ENCODE measurements at regions of chr9 and their contacts with region 1.

Region 1: GRCh38 chr9:136949817-136950655 is 2.0 kb upstream of the LCN12 start:
- DNase-seq: peak; percentile 86 to 99
- H3K4me3 ChIP-seq: peak overlapping the region; percentile 77
- H3K27ac ChIP-seq: peak overlapping the region; percentile 68
- H3K4me1 ChIP-seq: peaks cover 20% of the 10 kb centered on the region
- H3K27me3 ChIP-seq: no peaks in the 10 kb centered on the region
- CTCF ChIP-seq: no peak; the same call in 1 of the 2 replicates

Region 2: GRCh38 chr9:136372561-136373299 is 577.3 kb before region 1 on chr9:
- CTCF ChIA-PET with region 1: no interaction called
- POLR2A ChIA-PET with region 1: no interaction called
- intact Hi-C with region 1: no loop called
- DNase-seq: peak; percentile 89 to 91
- H3K4me3 ChIP-seq: peak overlapping the region; percentile 38; the same call in 1 of the 2 replicates
- H3K27ac ChIP-seq: peak overlapping the region; percentile 81
- H3K4me1 ChIP-seq: peaks cover 25% of the 10 kb centered on the region
- H3K27me3 ChIP-seq: no peaks in the 10 kb centered on the region
- CTCF ChIP-seq: peak; percentile 36

Region 3: DNA sequence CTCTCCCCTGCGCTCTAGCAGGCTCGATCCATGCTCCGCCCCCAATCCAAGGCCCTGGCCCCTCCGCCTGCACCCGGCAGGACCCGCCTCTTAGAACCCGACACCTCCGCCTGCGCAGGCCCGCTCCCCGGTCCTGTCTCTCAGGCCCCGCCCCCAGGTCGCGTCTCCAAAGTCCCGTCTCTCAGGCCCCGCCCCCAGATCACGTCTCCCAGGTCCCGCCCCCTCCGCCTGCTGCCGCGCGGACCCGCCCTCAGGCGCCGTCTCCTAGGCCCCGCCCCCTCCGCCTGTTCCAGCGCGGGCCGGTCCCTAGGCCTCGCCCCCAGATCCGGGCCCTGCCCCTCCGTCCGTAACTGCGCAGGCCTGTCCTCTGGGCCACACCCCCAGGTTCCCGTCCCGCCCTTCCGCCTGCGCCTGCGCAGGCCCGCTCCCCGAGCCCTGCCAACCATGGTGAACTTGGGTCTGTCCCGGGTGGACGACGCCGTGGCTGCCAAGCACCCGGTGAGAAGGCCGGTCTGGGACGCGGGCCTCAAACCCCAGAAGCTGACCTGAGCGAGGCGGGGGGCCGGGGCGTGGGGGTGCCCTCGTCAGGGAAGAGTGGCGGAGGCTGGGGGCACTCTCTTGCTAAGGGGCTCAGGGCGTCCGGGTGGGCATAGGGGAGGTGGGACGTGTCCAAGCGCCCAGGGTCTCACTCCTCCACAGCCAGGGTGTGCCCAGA is 159.0 kb before region 1 on chr9 and contains the start of gene TMEM141:
- CTCF ChIA-PET with region 1: no interaction called
- POLR2A ChIA-PET with region 1: no interaction called
- intact Hi-C with region 1: loop called (anchors 2 kb)
- DNase-seq: peak; percentile 94 to 100
- H3K4me3 ChIP-seq: peak within 1 kb of the TSS; percentile 68
- H3K27ac ChIP-seq: peak within 1 kb of the TSS; percentile 79
- H3K4me1 ChIP-seq: peaks cover 15% of the 10 kb centered on the region; the same call in 1 of the 2 replicates
- H3K27me3 ChIP-seq: no peaks in the 10 kb centered on the region
- CTCF ChIP-seq: no peak
- total RNA-seq, gene TMEM141: 83.6 and 124 TPM in 2 replicates

Region 4: GRCh38 chr9:136991993-136992818 is 42.2 kb after region 1 on chr9 and contains the start of gene PAXX:
- CTCF ChIA-PET with region 1: interaction called, 11 read pairs
- POLR2A ChIA-PET with region 1: interaction called, 9 read pairs
- intact Hi-C with region 1: loop called (anchors 1 kb)
- DNase-seq: peak; percentile 77 to 97
- H3K4me3 ChIP-seq: peak within 1 kb of the TSS; percentile 88
- H3K27ac ChIP-seq: peak within 1 kb of the TSS; percentile 42
- H3K4me1 ChIP-seq: peaks cover 22% of the 10 kb centered on the region
- H3K27me3 ChIP-seq: no peaks in the 10 kb centered on the region
- CTCF ChIP-seq: no peak
- total RNA-seq, gene PAXX: 54.9 and 78.9 TPM in 2 replicates

Region 5: DNA sequence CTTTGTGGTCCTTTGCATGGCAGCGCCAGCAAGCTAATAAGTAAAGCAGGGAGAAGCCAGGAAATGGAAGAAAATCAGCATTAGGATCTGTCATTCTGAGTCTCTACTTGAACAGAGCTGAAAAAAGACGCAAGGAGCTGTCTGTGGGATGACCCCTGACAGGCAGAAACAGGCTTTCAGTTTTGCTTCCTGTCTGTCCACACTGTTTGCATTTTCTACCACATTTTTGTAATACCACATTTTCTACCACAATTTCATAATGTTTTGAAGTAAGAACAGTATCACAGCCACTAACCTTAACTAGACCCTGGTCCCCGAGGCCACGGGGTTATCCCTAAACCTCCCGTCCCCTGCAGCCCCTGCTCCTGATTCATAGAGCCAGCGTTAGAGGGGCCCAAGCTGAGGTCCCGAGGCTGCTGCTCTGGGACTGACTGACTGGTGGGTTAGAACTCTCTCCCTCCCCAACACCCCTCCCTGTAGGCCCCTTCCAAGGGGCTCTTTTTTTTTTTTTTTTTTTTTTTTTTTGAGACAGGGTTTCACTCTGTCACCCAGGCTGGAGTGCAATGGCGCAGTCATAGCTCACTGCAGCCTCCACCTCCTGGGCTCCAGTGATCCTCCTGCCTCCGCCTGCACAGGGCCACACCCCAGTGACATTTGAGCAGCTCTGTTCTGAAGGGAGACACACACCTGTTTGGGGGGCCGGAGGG is 50.3 kb after region 1 on chr9:
- CTCF ChIA-PET with region 1: interaction called, 5 read pairs
- POLR2A ChIA-PET with region 1: interaction called, 9 read pairs
- intact Hi-C with region 1: loop called (anchors 1 kb)
- DNase-seq: no peak
- H3K4me3 ChIP-seq: no peak overlapping the region
- H3K27ac ChIP-seq: no peak overlapping the region
- H3K4me1 ChIP-seq: peaks cover 30% of the 10 kb centered on the region
- H3K27me3 ChIP-seq: no peaks in the 10 kb centered on the region
- CTCF ChIP-seq: no peak

Region 6: DNA sequence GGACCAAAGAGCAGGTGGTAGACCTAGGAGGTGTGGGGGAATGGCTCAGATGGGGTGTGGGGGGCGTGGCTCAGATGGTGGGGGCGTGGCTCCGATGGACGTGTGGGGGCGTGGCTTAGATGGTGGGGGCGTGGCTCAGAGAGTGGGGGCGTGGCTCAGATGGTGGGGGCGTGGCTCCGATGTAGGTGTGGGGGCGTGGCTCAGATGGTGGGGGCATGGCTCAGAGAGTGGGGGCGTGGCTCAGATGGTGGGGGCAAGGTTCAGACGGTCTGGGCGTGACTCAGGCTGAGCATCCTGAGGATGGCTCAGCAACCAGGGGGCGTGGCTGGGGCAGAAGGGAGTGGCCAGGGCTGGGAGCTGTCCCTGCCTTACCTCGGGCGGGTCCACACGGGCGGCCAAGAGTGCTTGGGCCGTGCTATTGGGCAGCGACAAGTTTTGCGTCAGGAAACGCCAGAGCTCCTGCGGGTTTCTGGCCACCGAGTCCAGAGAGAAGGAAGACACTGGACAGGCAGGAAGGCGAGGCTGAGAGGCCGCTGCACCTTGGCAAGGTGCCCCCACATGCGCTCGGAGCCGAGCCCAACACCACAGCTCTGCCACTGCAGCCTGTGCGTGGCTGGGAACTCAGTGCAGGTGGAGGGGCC is 72.1 kb after region 1 on chr9:
- CTCF ChIA-PET with region 1: interaction called, 10 read pairs
- POLR2A ChIA-PET with region 1: no interaction called
- intact Hi-C with region 1: no loop called
- DNase-seq: peak; percentile 81 to 89
- H3K4me3 ChIP-seq: no peak overlapping the region
- H3K27ac ChIP-seq: no peak overlapping the region
- H3K4me1 ChIP-seq: no peaks in the 10 kb centered on the region
- H3K27me3 ChIP-seq: no peaks in the 10 kb centered on the region
- CTCF ChIP-seq: no peak

Region 7: GRCh38 chr9:137029058-137029936 is 79.3 kb after region 1 on chr9:
- CTCF ChIA-PET with region 1: interaction called, 46 read pairs
- POLR2A ChIA-PET with region 1: interaction called, 6 read pairs
- intact Hi-C with region 1: no loop called
- DNase-seq: peak in 1 of 2 experiments; percentile 86
- H3K4me3 ChIP-seq: no peak overlapping the region; the same call in 1 of the 2 replicates
- H3K27ac ChIP-seq: no peak overlapping the region
- H3K4me1 ChIP-seq: peaks cover 8% of the 10 kb centered on the region; the same call in 1 of the 2 replicates
- H3K27me3 ChIP-seq: no peaks in the 10 kb centered on the region
- CTCF ChIP-seq: peak; percentile 86

Region 8: GRCh38 chr9:137034863-137035761 is 85.1 kb after region 1 on chr9:
- CTCF ChIA-PET with region 1: interaction called, 46 read pairs
- POLR2A ChIA-PET with region 1: interaction called, 10 read pairs
- intact Hi-C with region 1: loop called (anchors 1 kb)
- DNase-seq: peak; percentile 70 to 88
- H3K4me3 ChIP-seq: peak overlapping the region; percentile 29; the same call in 1 of the 2 replicates
- H3K27ac ChIP-seq: no peak overlapping the region
- H3K4me1 ChIP-seq: peaks cover 9% of the 10 kb centered on the region
- H3K27me3 ChIP-seq: no peaks in the 10 kb centered on the region
- CTCF ChIP-seq: peak; percentile 87

Measured in PC-9 (cell line).